Adrenal gland (tissue), 19 donors: ENCODE measurements at regions of chr6 and their contacts with region 1.

Region 1: GRCh38 chr6:111709615-111710398 is 104.1 kb upstream of the TRAF3IP2 start:
- DNase-seq: peak; percentile 63 to 81 (median 71)
- H3K4me3 ChIP-seq: peak overlapping the region in 1 of 4 donors; percentile 25
- H3K27ac ChIP-seq: no peak overlapping the region
- H3K4me1 ChIP-seq: peaks cover 3 to 8% of the 10 kb centered on the region in 2 donors
- H3K27me3 ChIP-seq: no peaks in the 10 kb centered on the region
- CTCF ChIP-seq: peak; percentile 73 to 95 (median 84)
- POLR2A ChIP-seq: no peak

Region 2: DNA sequence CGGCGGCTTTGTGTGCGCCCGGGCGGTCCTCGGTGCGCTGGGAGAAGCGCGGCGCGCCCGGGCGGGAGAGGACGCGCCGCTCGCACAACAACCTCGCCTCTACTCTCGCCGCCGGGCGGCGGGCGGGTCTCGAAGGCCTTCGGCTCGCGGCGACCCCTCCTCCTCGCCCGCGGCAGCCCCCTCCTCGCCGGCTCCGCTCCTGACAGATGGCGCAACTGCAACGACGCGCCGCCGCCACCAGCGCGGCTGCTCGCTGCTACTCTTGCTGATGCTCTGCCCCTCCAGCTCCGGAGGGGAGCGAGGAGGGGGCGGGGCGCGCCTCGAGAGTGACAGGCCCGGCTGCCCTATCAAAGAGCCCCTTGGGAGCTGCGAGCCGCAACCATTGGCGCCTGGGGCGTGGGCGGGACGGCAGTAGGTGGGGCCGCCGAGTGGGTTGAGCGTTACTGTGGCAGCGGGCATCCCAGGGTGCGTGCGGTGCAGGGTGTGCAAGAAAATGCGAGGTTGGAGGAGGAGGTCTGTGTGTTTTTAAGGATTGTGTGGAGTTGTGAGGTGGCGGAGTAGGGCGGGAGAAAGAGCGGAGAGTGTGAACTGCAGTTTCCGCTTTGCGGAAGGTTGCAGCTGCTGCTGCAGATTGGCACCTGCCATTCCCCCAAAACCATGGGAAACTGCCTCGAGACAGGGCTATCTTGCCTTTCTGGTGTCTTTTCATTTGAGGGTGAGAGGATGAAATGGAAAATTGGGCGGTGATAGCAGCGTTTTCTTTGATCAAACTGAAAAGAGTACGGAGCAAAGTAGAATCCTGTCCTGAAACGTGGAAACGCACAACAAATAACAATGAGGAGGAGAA is 163.6 kb after region 1 on chr6 and contains the start of gene FYN:
- intact Hi-C with region 1: loop called in 1 of 2 experiments (anchors 10 kb)
- DNase-seq: peak; percentile 93 to 98 (median 96)
- H3K4me3 ChIP-seq: peak within 1 kb of the TSS in 2 of 4 donors; percentile 29 to 76
- H3K27ac ChIP-seq: peak within 1 kb of the TSS in 2 of 5 donors; percentile 76 to 80
- H3K4me1 ChIP-seq: peaks cover 0 to 9% of the 10 kb centered on the region in 2 donors
- H3K27me3 ChIP-seq: peaks cover 19% of the 10 kb centered on the region
- CTCF ChIP-seq: peak in 5 of 6 experiments; percentile 24 to 69 (median 43)
- POLR2A ChIP-seq: peak; percentile 42 to 45
- total RNA-seq, gene FYN: 10.7 to 36.5 (median 22.1) TPM

Region 3: DNA sequence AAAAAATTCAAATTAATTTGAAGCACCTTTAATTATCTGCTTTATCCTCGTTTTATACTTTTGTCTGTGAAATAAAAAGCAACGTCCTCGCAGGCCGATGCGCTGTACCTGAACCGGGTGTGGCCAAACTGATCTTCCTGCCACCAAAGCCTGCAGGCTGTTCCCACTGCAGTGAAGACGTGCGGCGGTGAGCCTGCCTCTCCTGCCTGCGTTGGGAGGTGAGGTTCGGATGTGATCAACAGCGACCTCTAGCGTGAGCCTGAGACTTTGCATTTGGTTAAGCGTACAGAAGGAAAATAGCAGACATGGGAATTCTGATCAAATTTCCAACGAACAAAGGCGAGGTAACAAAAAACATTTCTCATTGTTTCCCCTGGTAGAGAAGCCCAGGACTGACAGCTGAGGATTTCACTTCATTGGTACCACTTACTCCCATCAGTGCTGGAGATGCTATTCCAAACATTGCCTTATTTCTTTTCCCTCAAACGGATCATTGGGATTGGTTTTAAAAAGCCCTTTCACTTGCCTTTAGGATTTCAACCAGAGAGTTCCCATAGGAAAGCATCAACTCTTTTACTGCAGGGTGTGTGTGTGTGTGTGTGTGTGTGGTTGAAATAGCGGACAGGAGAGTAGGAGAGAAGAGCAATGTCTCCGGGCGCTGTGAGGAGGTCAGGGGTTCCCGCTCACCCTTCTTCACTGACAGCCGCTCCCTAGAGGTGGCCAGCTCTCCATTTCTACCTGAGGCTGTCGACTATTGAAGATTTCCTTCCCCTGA is 287.5 kb after region 1 on chr6:
- intact Hi-C with region 1: loop called (anchors 5 kb)
- DNase-seq: peak; percentile 72 to 90 (median 80)
- H3K4me3 ChIP-seq: no peak overlapping the region
- H3K27ac ChIP-seq: peak overlapping the region in 1 of 5 donors; percentile 39
- H3K4me1 ChIP-seq: peaks cover 0 to 6% of the 10 kb centered on the region in 2 donors
- H3K27me3 ChIP-seq: no peaks in the 10 kb centered on the region
- CTCF ChIP-seq: peak; percentile 76 to 93 (median 89)
- POLR2A ChIP-seq: no peak

Region 4: GRCh38 chr6:112043032-112044007 is 333.5 kb after region 1 on chr6:
- intact Hi-C with region 1: loop called (anchors 5 kb)
- DNase-seq: peak; percentile 83 to 95 (median 88)
- H3K4me3 ChIP-seq: peak overlapping the region; percentile 2 to 76 (median 50)
- H3K27ac ChIP-seq: peak overlapping the region; percentile 38 to 92 (median 75)
- H3K4me1 ChIP-seq: peaks cover 0 to 16% of the 10 kb centered on the region in 2 donors
- H3K27me3 ChIP-seq: no peaks in the 10 kb centered on the region
- CTCF ChIP-seq: peak; percentile 88 to 96 (median 90)
- POLR2A ChIP-seq: peak in 1 of 2 donors; percentile 43

Region 5: GRCh38 chr6:112169541-112169940 is 459.7 kb after region 1 on chr6:
- intact Hi-C with region 1: loop called in 1 of 2 experiments (anchors 5 kb)
- DNase-seq: no peak
- H3K4me3 ChIP-seq: no peak overlapping the region
- H3K27ac ChIP-seq: no peak overlapping the region
- H3K4me1 ChIP-seq: no peaks in the 10 kb centered on the region
- H3K27me3 ChIP-seq: no peaks in the 10 kb centered on the region
- CTCF ChIP-seq: no peak
- POLR2A ChIP-seq: no peak